ENCODE measurements at regions of chr17 and their contacts with region 1.

Region 1: GRCh38 chr17:43211480-43212402 is at the start of gene TMEM106A:
- DNase-seq: peak; percentile 90
- ATAC-seq: peak; percentile 88
- H3K4me3 ChIP-seq: peak within 1 kb of the TSS; percentile 71 to 92 (median 83)
- H3K4me3 Mint-ChIP-seq: peak within 1 kb of the TSS; percentile 99
- H3K27ac ChIP-seq: peak within 1 kb of the TSS; percentile 79 to 88
- H3K27ac Mint-ChIP-seq: peak within 1 kb of the TSS; percentile 98
- H3K4me1 ChIP-seq: peaks cover 21 to 27% of the 10 kb centered on the region in 2 donors
- H3K4me1 Mint-ChIP-seq: peaks cover 35% of the 10 kb centered on the region
- H3K27me3 ChIP-seq: no peaks in the 10 kb centered on the region
- H3K27me3 Mint-ChIP-seq: no peaks in the 10 kb centered on the region
- CTCF ChIP-seq: peak; percentile 62
- total RNA-seq, gene TMEM106A: 66.0 and 66.3 TPM in 2 replicates

Region 2: DNA sequence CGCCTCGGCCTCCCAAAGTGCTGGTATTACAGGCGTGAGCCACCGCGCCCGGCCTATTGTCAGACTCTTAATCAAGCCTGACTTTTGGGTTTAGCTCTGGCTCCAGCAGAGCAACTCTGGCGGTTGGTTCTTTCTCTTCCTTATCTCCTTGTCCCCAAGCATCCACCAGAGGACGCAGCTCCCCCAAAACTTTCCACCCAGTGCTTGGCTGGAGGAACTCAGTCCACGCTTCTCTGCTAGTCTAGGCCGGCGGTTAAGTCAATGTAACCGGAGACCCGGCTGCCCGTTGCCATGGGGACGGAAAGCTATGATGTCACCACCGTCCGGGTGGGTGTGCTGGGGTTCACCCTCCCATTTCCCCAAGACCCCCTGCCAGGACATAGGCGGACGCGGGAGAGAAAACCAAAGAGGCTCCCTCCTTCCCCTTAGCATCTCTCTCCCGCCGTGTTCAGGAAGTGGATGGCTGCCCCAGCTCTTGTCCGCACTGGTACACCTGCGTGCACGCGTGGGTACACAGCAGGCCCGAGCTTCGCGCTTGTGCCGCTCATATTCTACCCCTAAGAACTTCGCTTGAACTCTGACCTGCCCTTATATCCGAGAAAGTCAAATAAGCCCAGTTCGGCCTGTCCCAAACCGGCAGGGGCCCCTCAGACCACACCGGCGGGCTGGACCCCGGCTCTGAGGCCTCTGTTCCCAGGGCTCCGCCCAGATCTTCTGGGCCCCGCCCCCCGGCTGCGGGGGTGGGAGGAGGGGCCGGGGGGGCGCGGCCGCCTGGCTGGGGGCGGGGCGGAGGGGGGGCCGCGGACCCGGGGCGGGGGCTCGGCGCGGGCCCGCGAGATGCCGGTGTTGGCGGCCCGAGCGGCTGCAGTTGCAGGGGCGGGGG is 187.1 kb before region 1 on chr17 and contains the start of gene RND2:
- CTCF ChIA-PET with region 1: no interaction called
- POLR2A ChIA-PET with region 1: interaction called, 4 read pairs
- intact Hi-C with region 1: loop called (anchors 1 kb)
- DNase-seq: peak; percentile 92
- ATAC-seq: peak; percentile 71
- H3K4me3 ChIP-seq: peak within 1 kb of the TSS; percentile 49 to 77 (median 68)
- H3K4me3 Mint-ChIP-seq: peak within 1 kb of the TSS; percentile 88
- H3K27ac ChIP-seq: peak within 1 kb of the TSS in 1 of 2 donors; percentile 63
- H3K27ac Mint-ChIP-seq: peak within 1 kb of the TSS; percentile 87
- H3K4me1 ChIP-seq: peaks cover 9 to 31% of the 10 kb centered on the region in 2 donors
- H3K4me1 Mint-ChIP-seq: peaks cover 29% of the 10 kb centered on the region
- H3K27me3 ChIP-seq: no peaks in the 10 kb centered on the region
- H3K27me3 Mint-ChIP-seq: no peaks in the 10 kb centered on the region
- CTCF ChIP-seq: peak; percentile 62
- total RNA-seq, gene RND2: 0.44 and 1.2 TPM in 2 replicates

Region 3: DNA sequence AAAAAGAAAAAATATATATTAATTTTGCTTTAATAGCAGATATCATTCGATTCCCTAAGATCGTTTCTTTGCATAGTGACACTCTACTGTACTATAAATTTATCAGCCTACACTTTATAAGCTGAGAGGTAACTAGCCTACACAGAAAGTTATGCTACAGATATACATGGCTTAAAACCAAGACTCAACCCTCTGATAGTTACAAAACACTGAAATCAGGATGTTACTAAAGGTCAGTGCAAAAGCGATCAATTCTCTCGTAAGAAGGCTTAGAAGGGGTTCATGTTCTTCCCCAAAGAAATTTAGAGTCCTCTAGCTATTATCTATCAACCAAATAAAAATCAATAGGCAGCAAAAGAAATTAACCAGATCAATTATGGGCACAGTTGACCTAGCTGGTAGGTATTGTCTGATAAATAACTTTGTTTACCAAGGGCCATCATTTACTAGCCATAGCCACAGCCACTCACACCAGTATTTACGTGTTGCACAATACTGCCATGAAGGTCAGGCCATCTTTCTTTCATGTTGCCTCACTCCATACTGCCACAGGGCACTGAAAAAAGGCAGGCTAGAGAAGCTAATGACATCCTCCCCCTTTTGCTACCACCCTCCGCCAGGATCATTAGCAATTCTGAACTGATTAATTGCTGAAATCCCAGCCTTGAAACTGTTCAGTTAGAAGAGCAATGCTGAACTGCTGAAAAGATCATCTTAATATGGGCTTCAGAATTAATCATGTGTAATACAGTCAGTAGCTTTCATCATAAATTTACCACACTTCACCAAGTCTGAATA is 143.0 kb before region 1 on chr17:
- CTCF ChIA-PET with region 1: no interaction called
- POLR2A ChIA-PET with region 1: no interaction called
- intact Hi-C with region 1: no loop called
- DNase-seq: no peak
- ATAC-seq: no peak
- H3K4me3 ChIP-seq: no peak overlapping the region
- H3K4me3 Mint-ChIP-seq: no peak overlapping the region
- H3K27ac ChIP-seq: no peak overlapping the region
- H3K27ac Mint-ChIP-seq: no peak overlapping the region
- H3K4me1 ChIP-seq: no peaks in the 10 kb centered on the region
- H3K4me1 Mint-ChIP-seq: no peaks in the 10 kb centered on the region
- H3K27me3 ChIP-seq: no peaks in the 10 kb centered on the region
- H3K27me3 Mint-ChIP-seq: no peaks in the 10 kb centered on the region
- CTCF ChIP-seq: no peak

Region 4: DNA sequence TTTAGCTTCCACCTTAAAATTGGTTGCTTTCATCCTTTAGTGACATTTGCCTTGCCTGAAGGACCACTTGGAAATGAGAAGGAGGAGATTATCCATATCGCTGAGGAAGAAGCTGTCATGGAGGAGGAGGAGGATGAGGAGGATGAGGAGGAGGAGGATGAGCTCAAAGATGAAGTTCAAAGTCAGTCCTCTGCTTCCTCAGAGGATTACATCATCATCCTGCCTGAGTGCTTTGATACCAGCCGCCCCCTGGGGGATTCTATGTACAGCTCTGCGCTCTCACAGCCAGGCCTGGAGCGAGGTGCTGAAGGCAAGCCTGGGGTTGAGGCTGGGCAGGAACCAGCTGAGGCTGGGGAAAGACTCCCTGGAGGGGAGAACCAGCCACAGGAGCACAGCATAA is 11.6 kb before region 1 on chr17:
- CTCF ChIA-PET with region 1: interaction called, 13 read pairs
- POLR2A ChIA-PET with region 1: no interaction called
- intact Hi-C with region 1: no loop called
- DNase-seq: no peak
- ATAC-seq: no peak
- H3K4me3 ChIP-seq: no peak overlapping the region
- H3K4me3 Mint-ChIP-seq: no peak overlapping the region
- H3K27ac ChIP-seq: no peak overlapping the region
- H3K27ac Mint-ChIP-seq: no peak overlapping the region
- H3K4me1 ChIP-seq: no peaks in the 10 kb centered on the region
- H3K4me1 Mint-ChIP-seq: no peaks in the 10 kb centered on the region
- H3K27me3 ChIP-seq: no peaks in the 10 kb centered on the region
- H3K27me3 Mint-ChIP-seq: no peaks in the 10 kb centered on the region
- CTCF ChIP-seq: no peak

Region 5: DNA sequence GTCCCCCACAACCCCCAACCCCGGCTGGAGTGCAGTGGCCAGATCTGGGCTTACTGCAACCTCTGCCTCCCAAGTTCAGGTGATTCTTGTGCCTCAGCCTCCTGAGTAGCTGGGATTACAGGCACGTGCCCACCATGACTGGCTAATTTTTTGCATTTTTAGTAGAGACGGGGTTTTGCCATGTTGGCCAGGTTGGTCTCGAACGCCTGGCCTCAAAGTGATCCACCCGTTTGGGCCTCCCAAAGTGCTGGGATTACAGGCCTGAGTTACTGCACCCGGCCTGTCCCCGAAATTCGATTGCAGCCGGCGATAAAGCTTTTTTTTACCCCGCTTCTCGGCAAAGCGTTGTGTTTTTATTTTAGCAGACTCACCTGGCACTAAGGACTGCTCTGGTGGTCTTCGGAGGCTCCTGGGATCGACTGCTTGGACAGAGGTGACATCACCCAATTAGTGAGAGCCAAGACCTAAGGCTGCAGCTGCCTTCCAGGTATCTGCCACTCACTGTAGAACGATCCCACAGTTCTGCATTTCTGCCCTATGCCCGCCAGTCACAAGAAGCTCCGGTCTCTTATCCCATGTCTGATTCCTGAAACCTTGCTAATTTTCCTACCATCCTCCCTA is 104.9 kb after region 1 on chr17:
- CTCF ChIA-PET with region 1: interaction called, 9 read pairs
- POLR2A ChIA-PET with region 1: interaction called, 115 read pairs
- intact Hi-C with region 1: loop called (anchors 1 kb)
- DNase-seq: peak; percentile 78
- ATAC-seq: no peak
- H3K4me3 ChIP-seq: peak overlapping the region in 1 of 5 experiments; percentile 25
- H3K4me3 Mint-ChIP-seq: peak overlapping the region; percentile 29
- H3K27ac ChIP-seq: peak overlapping the region in 1 of 2 donors; percentile 46
- H3K27ac Mint-ChIP-seq: no peak overlapping the region
- H3K4me1 ChIP-seq: peaks cover 0 to 4% of the 10 kb centered on the region in 2 donors
- H3K4me1 Mint-ChIP-seq: peaks cover 16% of the 10 kb centered on the region
- H3K27me3 ChIP-seq: no peaks in the 10 kb centered on the region
- H3K27me3 Mint-ChIP-seq: no peaks in the 10 kb centered on the region
- CTCF ChIP-seq: no peak

Measured in B cell (primary cell).